Endothelial cell of umbilical vein (primary cell): ENCODE measurements at regions of chr13 and their contacts with region 1.

Region 1: GRCh38 chr13:31909864-31910551 is 121.6 kb upstream of the FRY start:
- DNase-seq: peak; percentile 68
- H3K4me3 ChIP-seq: no peak overlapping the region
- H3K27ac ChIP-seq: no peak overlapping the region
- H3K4me1 ChIP-seq: no peaks in the 10 kb centered on the region
- H3K27me3 ChIP-seq: peaks cover 6 to 9% of the 10 kb centered on the region in 2 experiments
- CTCF ChIP-seq: peak; percentile 72 to 75
- POLR2A ChIP-seq: no peak

Region 2: GRCh38 chr13:31919971-31920726 is 10.1 kb after region 1 on chr13:
- CTCF ChIA-PET with region 1: interaction called, 39 read pairs
- POLR2A ChIA-PET with region 1: no interaction called
- dilution Hi-C with region 1: no loop called
- intact Hi-C with region 1: no loop called
- DNase-seq: no peak
- H3K4me3 ChIP-seq: no peak overlapping the region
- H3K27ac ChIP-seq: no peak overlapping the region
- H3K4me1 ChIP-seq: no peaks in the 10 kb centered on the region
- H3K27me3 ChIP-seq: no peaks in the 10 kb centered on the region
- CTCF ChIP-seq: no peak
- POLR2A ChIP-seq: no peak

Region 3: DNA sequence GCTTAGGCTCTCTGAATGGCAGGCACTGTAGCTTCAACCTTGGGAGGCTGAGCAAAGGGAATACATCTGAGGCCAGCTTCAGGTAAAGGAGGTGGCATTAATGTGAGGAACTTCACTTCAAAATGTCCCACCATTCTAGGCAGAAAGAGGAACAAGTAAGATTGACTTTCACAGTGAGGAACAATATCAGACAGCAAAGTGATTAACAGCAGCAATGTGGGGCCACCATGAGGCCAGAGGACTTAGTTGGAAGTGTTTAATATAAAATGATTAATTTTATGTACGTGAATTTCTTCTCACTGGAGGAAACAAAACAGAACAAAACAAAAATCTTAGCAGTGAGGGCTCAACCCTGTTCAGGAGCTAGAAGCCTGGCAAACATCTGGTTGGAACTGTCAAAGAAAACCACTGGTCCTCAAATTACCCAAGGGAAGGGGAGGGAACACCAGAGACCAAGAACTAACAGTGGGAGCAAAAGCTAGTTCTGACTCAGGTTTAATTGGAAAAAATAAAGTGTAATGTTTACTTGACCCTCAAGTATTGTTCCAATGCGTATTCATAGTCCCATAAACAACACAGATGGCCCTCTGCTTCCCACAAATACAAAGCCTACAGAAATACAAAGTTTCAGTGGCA is 77.6 kb after region 1 on chr13:
- CTCF ChIA-PET with region 1: interaction called, 10 read pairs
- POLR2A ChIA-PET with region 1: no interaction called
- dilution Hi-C with region 1: no loop called
- intact Hi-C with region 1: no loop called
- DNase-seq: no peak
- H3K4me3 ChIP-seq: no peak overlapping the region
- H3K27ac ChIP-seq: no peak overlapping the region
- H3K4me1 ChIP-seq: no peaks in the 10 kb centered on the region
- H3K27me3 ChIP-seq: peaks cover 2% of the 10 kb centered on the region in 2 experiments
- CTCF ChIP-seq: no peak
- POLR2A ChIP-seq: no peak

Region 4: GRCh38 chr13:32019612-32020233 is 109.7 kb after region 1 on chr13:
- CTCF ChIA-PET with region 1: interaction called, 14 read pairs
- POLR2A ChIA-PET with region 1: no interaction called
- dilution Hi-C with region 1: no loop called
- intact Hi-C with region 1: loop called (anchors 5 kb)
- DNase-seq: peak; percentile 84
- H3K4me3 ChIP-seq: no peak overlapping the region
- H3K27ac ChIP-seq: no peak overlapping the region
- H3K4me1 ChIP-seq: no peaks in the 10 kb centered on the region
- H3K27me3 ChIP-seq: peaks cover 0 to 10% of the 10 kb centered on the region in 2 experiments
- CTCF ChIP-seq: peak; percentile 75 to 79
- POLR2A ChIP-seq: no peak

Region 5: GRCh38 chr13:32427852-32428580 is 518.0 kb after region 1 on chr13 and contains the start of gene N4BP2L1:
- CTCF ChIA-PET with region 1: interaction called, 10 read pairs
- POLR2A ChIA-PET with region 1: no interaction called
- dilution Hi-C with region 1: no loop called
- intact Hi-C with region 1: no loop called
- DNase-seq: peak; percentile 56
- H3K4me3 ChIP-seq: peak within 1 kb of the TSS; percentile 48 to 79 (median 62)
- H3K27ac ChIP-seq: no peak within 1 kb of the TSS
- H3K4me1 ChIP-seq: peaks cover 13% of the 10 kb centered on the region
- H3K27me3 ChIP-seq: no peaks in the 10 kb centered on the region
- CTCF ChIP-seq: no peak
- POLR2A ChIP-seq: no peak
- total RNA-seq, gene N4BP2L1: 1.8 and 2.1 TPM in 2 replicates

Region 6: DNA sequence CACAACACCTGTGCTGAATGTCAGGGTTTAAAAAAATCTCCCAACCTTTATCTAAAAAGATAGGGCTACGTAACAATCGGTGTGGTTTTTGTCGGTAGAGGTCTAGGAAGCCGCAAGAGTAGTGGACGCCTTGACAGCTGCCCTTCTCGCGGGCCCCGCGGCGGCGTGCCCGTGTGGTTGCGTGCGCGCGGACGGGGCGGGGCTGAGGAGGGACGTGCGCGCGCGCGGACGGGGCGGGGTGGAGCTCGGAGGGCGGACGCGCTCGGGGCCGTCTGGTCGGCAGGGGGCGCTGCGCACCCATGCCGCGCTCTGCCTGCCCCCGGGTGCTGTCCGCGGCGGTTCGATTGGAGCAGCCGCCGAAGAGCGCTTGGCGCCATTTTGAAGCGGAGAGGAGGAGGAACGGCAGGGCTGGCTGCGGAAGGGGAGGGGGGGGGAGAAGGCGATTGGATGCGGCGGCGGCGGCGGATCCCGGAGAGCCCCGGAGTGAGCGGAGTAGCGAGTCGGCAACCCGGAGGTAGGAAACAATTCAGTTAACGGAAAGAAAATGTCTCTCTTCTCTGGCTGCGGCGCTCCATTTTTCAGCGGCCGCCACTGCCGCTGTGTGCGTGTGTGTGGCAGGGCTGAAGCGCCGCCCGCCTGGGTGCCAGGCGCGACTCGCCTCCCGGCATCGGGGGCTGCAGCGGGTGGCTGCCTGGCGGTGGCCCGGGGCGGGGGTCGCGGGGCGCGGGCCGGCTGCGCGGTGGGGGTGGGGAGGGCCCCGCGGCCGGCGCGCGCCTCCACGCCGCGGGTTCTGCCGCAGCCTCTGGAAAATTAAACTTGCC is 676.3 kb after region 1 on chr13 and contains the start of gene PDS5B:
- CTCF ChIA-PET with region 1: interaction called, 437 read pairs
- POLR2A ChIA-PET with region 1: no interaction called
- dilution Hi-C with region 1: no loop called
- intact Hi-C with region 1: loop called (anchors 1 kb)
- DNase-seq: peak; percentile 96
- H3K4me3 ChIP-seq: peak within 1 kb of the TSS; percentile 43 to 98 (median 89)
- H3K27ac ChIP-seq: peak within 1 kb of the TSS; percentile 86
- H3K4me1 ChIP-seq: peaks cover 20% of the 10 kb centered on the region
- H3K27me3 ChIP-seq: peaks cover 0 to 1% of the 10 kb centered on the region in 2 experiments
- CTCF ChIP-seq: peak; percentile 76 to 93
- POLR2A ChIP-seq: peak; percentile 83
- total RNA-seq, gene PDS5B: 40.3 and 41.0 TPM in 2 replicates

Region 7: DNA sequence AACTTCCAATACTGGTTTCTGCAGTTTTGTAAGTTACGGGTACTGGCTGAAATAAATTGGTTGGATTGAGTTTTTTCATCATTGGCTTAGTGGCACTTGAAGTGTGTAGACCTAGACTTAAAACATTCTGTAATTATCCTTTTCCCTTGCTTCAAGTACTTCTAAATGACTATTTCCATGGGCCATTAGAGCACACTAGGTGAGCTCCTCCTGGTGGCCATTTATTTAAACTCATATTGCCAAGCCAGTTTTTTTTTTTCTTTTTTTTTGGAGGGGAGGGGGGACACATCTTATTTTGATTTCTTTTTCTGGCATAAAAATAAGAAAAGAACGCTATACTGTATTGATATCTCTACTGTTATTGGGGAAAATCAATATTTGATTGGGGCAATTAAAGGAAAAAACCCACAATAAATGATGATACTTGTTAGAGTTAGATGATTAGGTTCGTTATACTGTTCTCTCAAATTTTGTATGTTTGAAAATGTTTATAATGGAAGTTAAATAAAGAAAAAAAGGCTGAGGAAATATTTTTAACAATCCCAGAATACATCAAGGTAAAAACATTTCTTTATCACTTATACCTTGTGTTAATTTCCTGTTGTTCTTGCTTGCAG is 759.1 kb after region 1 on chr13:
- CTCF ChIA-PET with region 1: interaction called, 11 read pairs
- POLR2A ChIA-PET with region 1: no interaction called
- dilution Hi-C with region 1: no loop called
- intact Hi-C with region 1: loop called (anchors 10 kb)
- DNase-seq: peak; percentile 61
- H3K4me3 ChIP-seq: no peak overlapping the region
- H3K27ac ChIP-seq: no peak overlapping the region
- H3K4me1 ChIP-seq: no peaks in the 10 kb centered on the region
- H3K27me3 ChIP-seq: no peaks in the 10 kb centered on the region
- CTCF ChIP-seq: peak; percentile 44 to 54
- POLR2A ChIP-seq: no peak